Activated naive CD4-positive, alpha-beta T cell treated with anti-CD3 and anti-CD28 coated beads for 36 hours (primary cell): ENCODE measurements at regions of chr14 and their contacts with region 1.

Region 1: DNA sequence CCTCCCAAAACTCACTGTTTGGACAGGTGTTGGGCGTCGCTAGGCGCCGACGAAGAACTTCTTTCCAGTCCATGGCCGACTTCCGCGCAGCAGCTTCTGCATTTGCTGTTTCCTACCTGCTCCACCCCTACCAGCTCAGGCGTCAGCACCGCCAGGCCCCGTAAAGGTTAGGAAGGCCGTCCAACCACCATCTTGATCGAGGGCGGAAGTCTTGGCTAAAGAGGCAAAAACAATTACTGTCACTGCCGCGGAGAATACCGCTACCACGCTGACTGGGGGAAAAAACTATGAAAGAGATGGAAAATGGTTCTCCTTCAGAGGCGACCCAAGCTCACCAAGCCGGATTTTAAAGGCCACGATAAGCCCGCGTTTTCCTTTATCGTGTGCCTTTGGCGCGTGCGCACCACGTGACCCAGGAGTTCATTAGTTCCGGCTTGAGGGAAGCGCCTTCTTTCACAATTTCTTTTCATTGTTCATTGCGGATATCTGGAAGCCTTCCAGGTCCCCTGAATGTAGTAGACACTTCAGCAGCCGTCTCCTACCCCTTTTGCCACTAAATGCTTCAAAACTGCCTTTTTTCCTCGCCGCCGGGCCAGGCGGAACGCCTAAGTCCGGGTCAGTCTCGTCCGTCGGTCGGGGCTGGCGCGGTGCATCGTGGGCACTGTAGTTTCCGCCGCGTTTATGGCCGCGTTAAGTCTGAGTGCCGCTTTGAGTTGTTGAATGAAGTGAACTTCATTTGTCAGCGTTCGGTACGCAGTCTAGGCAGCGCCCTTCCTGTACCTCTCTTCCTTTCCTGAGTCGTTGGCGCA is at the starts of genes PPP2R3C and PRORP:
- DNase-seq: peak; percentile 93
- H3K4me3 Mint-ChIP-seq: peak within 1 kb of the TSS; percentile 95
- H3K27ac Mint-ChIP-seq: peak within 1 kb of the TSS; percentile 99
- H3K4me1 Mint-ChIP-seq: peaks cover 64% of the 10 kb centered on the region
- H3K27me3 Mint-ChIP-seq: no peaks in the 10 kb centered on the region
- total RNA-seq, gene PPP2R3C: 44.5 to 47.5 TPM
- total RNA-seq, gene PRORP: 37.9 to 40.8 TPM

Region 2: DNA sequence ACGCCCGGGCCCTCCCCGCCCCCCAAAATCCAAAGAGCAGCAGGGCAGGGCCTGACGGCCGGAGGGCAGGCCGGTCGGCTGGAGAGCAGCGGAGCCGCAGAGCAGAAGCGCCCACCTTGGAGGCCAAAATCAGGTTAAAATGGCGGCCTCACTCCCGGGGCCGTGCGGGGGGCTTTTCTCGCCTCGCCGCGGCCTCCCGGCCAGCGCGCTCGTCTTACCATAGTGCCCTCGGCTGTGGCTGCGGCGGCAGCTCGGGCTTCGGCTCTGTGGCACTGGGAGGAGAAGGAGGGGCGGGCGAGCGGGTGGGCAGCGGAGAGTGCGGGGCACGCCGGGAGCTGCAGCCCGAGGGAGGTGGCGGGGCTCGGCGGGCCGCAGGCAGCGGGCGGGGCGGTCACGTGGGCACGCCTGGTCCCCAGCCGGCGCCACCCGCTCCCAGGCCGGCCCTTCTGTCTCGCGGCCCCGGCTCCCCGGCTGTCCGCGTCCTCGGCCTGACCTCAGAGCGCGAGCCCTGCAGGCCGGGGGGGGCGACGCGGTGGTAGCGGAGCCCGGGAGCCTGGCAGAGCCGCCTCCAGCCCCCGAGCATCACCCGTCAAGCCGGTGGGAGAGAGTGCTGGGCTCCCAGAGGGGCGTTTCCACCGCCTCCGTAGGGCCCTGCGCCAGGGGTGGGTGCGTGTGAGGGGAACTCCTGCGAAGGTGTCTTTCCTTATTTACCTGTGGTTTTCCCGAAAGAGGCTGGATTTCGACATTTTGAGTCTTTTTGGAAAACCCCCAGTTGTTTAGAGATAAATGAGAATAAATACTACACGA is 407.6 kb before region 1 on chr14 and contains the start of gene CFL2:
- CTCF ChIA-PET with region 1: no interaction called
- intact Hi-C with region 1: loop called (anchors 1 kb)
- DNase-seq: peak; percentile 75
- H3K4me3 Mint-ChIP-seq: peak within 1 kb of the TSS; percentile 81
- H3K27ac Mint-ChIP-seq: peak within 1 kb of the TSS; percentile 82
- H3K4me1 Mint-ChIP-seq: peaks cover 18% of the 10 kb centered on the region
- H3K27me3 Mint-ChIP-seq: no peaks in the 10 kb centered on the region
- total RNA-seq, gene CFL2: 3.1 to 4.5 TPM

Region 3: GRCh38 chr14:34931206-34931605 is 190.9 kb before region 1 on chr14:
- CTCF ChIA-PET with region 1: no interaction called
- intact Hi-C with region 1: loop called (anchors 1 kb)
- DNase-seq: peak; percentile 56
- H3K4me3 Mint-ChIP-seq: peak overlapping the region; percentile 64
- H3K27ac Mint-ChIP-seq: peak overlapping the region; percentile 93
- H3K4me1 Mint-ChIP-seq: peaks cover 49% of the 10 kb centered on the region
- H3K27me3 Mint-ChIP-seq: no peaks in the 10 kb centered on the region

Region 4: DNA sequence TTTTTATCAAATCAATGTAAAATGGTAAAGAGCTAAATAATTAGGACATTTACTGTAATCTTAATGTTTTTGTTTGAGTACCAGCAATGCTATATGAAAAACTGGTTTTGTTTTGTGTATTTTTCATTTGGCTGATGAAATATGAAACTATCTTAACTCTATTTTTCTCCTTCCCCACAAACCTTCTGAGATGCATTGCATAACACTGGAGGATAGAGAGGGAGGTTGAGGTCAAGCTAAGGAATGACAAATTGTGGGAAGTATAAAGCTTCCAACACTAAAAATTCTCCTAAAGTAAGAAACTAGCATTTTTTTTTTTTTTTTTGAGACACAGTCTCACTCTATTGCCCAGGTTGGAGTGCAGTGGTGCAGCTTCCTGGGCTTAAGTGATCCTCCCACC is 170.8 kb before region 1 on chr14:
- CTCF ChIA-PET with region 1: no interaction called
- intact Hi-C with region 1: no loop called
- DNase-seq: no peak
- H3K4me3 Mint-ChIP-seq: no peak overlapping the region
- H3K27ac Mint-ChIP-seq: no peak overlapping the region
- H3K4me1 Mint-ChIP-seq: no peaks in the 10 kb centered on the region
- H3K27me3 Mint-ChIP-seq: no peaks in the 10 kb centered on the region

Region 5: DNA sequence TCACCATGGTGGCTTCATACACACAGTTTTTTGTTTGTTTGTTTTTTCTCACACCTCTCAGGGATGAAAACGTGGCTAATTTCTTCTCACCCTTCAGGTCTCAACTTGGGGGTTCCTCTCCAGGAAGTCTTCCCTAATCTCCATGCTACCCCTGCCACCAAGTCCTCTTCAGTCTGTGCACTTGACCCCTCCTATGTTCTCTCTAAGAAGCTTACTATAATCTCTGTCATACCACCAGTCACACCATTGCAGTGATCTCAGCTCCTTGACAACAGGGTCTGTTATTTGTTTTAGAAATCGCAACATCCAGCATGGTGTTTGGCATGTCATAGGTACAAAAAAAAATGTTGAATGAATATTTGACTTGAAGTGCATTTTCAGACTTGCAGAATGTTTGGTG is 83.6 kb after region 1 on chr14:
- CTCF ChIA-PET with region 1: interaction called, 3 read pairs
- intact Hi-C with region 1: loop called (anchors 2 kb)
- DNase-seq: no peak
- H3K4me3 Mint-ChIP-seq: no peak overlapping the region
- H3K27ac Mint-ChIP-seq: no peak overlapping the region
- H3K4me1 Mint-ChIP-seq: peaks cover 30% of the 10 kb centered on the region
- H3K27me3 Mint-ChIP-seq: no peaks in the 10 kb centered on the region

Region 6: GRCh38 chr14:35331605-35332516 is 209.8 kb after region 1 on chr14:
- CTCF ChIA-PET with region 1: no interaction called
- intact Hi-C with region 1: loop called (anchors 1 kb)
- DNase-seq: no peak
- H3K4me3 Mint-ChIP-seq: no peak overlapping the region
- H3K27ac Mint-ChIP-seq: peak overlapping the region; percentile 94
- H3K4me1 Mint-ChIP-seq: peaks cover 32% of the 10 kb centered on the region
- H3K27me3 Mint-ChIP-seq: no peaks in the 10 kb centered on the region

Region 7: GRCh38 chr14:35826218-35826951 is 704.3 kb after region 1 on chr14 and contains the start of gene BRMS1L:
- CTCF ChIA-PET with region 1: no interaction called
- intact Hi-C with region 1: loop called (anchors 1 kb)
- DNase-seq: peak; percentile 99
- H3K4me3 Mint-ChIP-seq: peak within 1 kb of the TSS; percentile 84
- H3K27ac Mint-ChIP-seq: peak within 1 kb of the TSS; percentile 92
- H3K4me1 Mint-ChIP-seq: peaks cover 29% of the 10 kb centered on the region
- H3K27me3 Mint-ChIP-seq: no peaks in the 10 kb centered on the region
- total RNA-seq, gene BRMS1L: 4.4 to 5.3 TPM